Naive thymus-derived CD4-positive, alpha-beta T cell (primary cell): ENCODE measurements at regions of chr4 and their contacts with region 1.

Region 1: DNA sequence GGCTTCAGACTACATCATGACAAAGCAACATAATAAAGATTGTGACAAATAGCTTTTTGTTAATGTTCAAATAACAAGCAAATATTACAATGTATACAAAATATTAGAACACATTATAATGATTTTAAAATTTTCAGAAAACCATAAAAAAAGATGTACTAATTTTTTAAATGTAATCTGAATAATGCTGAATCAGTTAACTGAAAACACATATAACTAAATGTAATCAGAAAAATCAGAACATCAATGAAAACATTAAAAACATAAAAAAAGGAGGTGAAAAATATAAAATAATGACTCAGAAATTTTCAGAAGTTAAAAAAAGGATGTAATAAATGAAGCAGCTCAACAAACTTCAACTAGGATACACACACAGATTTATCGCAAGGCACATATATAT is 53.5 kb downstream of the ZNF721 start:
- DNase-seq: no peak
- ATAC-seq: no peak
- H3K4me3 ChIP-seq: no peak overlapping the region
- H3K4me3 Mint-ChIP-seq: peak overlapping the region in 2 of 10 donors; percentile 40 to 42
- H3K27ac ChIP-seq: no peak overlapping the region
- H3K27ac Mint-ChIP-seq: no peak overlapping the region
- H3K4me1 ChIP-seq: no peaks in the 10 kb centered on the region
- H3K4me1 Mint-ChIP-seq: no peaks in the 10 kb centered on the region
- H3K27me3 ChIP-seq: no peaks in the 10 kb centered on the region
- H3K27me3 Mint-ChIP-seq: no peaks in the 10 kb centered on the region

Region 2: GRCh38 chr4:373062-373839 is 72.2 kb before region 1 on chr4:
- CTCF ChIA-PET with region 1: no interaction called
- POLR2A ChIA-PET with region 1: no interaction called
- intact Hi-C with region 1: loop called in 1 of 2 experiments (anchors 10 kb)
- DNase-seq: no peak
- ATAC-seq: no peak
- H3K4me3 ChIP-seq: peak overlapping the region; percentile 8
- H3K4me3 Mint-ChIP-seq: no peak overlapping the region
- H3K27ac ChIP-seq: no peak overlapping the region
- H3K27ac Mint-ChIP-seq: peak overlapping the region in 2 of 9 donors; percentile 28 to 32
- H3K4me1 ChIP-seq: no peaks in the 10 kb centered on the region
- H3K4me1 Mint-ChIP-seq: no peaks in the 10 kb centered on the region
- H3K27me3 ChIP-seq: no peaks in the 10 kb centered on the region
- H3K27me3 Mint-ChIP-seq: no peaks in the 10 kb centered on the region

Region 3: DNA sequence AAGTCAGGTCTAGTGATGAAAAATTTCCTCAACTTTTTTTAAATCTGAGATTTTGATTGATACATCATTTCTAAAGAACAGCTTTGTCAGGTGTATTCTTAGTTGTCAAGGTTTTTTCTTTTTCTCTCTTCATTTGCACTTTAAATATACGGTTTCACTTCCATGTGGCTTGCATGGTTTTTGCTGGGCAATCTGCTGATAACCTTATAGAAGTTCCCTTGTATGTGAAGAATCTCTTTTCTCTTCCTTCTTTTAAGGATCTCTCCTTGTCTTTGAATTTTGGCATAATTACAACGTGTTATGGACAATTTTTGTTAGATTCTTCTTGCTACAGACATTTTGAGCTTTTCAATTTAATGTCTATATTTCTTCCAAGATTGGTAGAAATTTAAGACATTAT is 22.8 kb before region 1 on chr4:
- CTCF ChIA-PET with region 1: no interaction called
- POLR2A ChIA-PET with region 1: no interaction called
- intact Hi-C with region 1: no loop called
- DNase-seq: no peak
- ATAC-seq: no peak
- H3K4me3 ChIP-seq: no peak overlapping the region
- H3K4me3 Mint-ChIP-seq: no peak overlapping the region
- H3K27ac ChIP-seq: no peak overlapping the region
- H3K27ac Mint-ChIP-seq: no peak overlapping the region
- H3K4me1 ChIP-seq: no peaks in the 10 kb centered on the region
- H3K4me1 Mint-ChIP-seq: no peaks in the 10 kb centered on the region
- H3K27me3 ChIP-seq: no peaks in the 10 kb centered on the region
- H3K27me3 Mint-ChIP-seq: no peaks in the 10 kb centered on the region